K562 (cell line): ENCODE measurements at regions of chr2 and their contacts with region 1.

Region 1: GRCh38 chr2:168948621-168949212 is 47.6 kb downstream of the G6PC2 start:
- DNase-seq: peak; percentile 51 to 65 (median 58)
- ATAC-seq: peak; percentile 80
- H3K4me3 ChIP-seq: no peak overlapping the region
- H3K27ac ChIP-seq: no peak overlapping the region
- H3K4me1 ChIP-seq: peaks cover 0 to 7% of the 10 kb centered on the region in 2 experiments; a peak in 2 of 5 replicates
- H3K27me3 ChIP-seq: no peaks in the 10 kb centered on the region
- CTCF ChIP-seq: peak; percentile 54 to 68 (median 67)
- EP300 ChIP-seq: no peak
- POLR2A ChIP-seq: no peak
- RAD21 ChIP-seq: peak in 1 of 2 experiments; percentile 70; a peak in 2 of 4 replicates

Region 2: DNA sequence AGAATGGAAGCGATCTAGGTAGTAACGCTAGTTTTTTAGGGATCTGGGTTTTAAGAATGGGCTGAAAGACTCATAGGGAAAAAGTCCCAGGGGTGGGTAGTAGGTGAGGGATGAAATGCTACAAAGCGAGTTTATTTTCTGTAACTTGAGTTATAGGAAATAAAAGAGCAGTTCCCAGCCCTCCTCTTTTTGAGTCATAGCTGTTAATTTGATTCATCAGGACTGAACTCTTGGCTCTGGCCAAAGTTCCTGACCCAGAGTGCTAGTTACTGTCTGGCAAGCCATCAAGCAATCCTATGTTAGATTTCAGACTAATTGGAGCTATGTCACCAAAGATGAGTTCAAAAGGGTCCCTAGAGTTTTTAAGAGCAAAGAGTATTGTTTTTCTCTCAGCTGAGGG is 163.7 kb before region 1 on chr2:
- CTCF ChIA-PET with region 1: no interaction called
- POLR2A ChIA-PET with region 1: no interaction called
- in situ Hi-C with region 1: no loop called
- intact Hi-C with region 1: no loop called
- DNase-seq: no peak
- ATAC-seq: no peak
- H3K4me3 ChIP-seq: no peak overlapping the region
- H3K27ac ChIP-seq: no peak overlapping the region
- H3K4me1 ChIP-seq: peaks cover 0 to 14% of the 10 kb centered on the region in 2 experiments; a peak in 2 of 5 replicates
- H3K27me3 ChIP-seq: no peaks in the 10 kb centered on the region
- CTCF ChIP-seq: no peak
- EP300 ChIP-seq: no peak
- POLR2A ChIP-seq: no peak
- RAD21 ChIP-seq: no peak

Region 3: GRCh38 chr2:169038338-169038757 is 89.6 kb after region 1 on chr2:
- CTCF ChIA-PET with region 1: no interaction called
- POLR2A ChIA-PET with region 1: no interaction called
- in situ Hi-C with region 1: no loop called
- intact Hi-C with region 1: no loop called
- DNase-seq: peak in 2 of 4 experiments; percentile 44 to 52
- ATAC-seq: peak; percentile 52
- H3K4me3 ChIP-seq: no peak overlapping the region
- H3K27ac ChIP-seq: 0 out of 3 replicates have a peak overlapping the region, but pooled peaks have one; percentile 25
- H3K4me1 ChIP-seq: peaks cover 0 to 22% of the 10 kb centered on the region in 2 experiments; a peak in 4 of 5 replicates
- H3K27me3 ChIP-seq: no peaks in the 10 kb centered on the region
- CTCF ChIP-seq: no peak
- EP300 ChIP-seq: peak; percentile 45; the same call in 1 of the 2 replicates
- POLR2A ChIP-seq: no peak
- RAD21 ChIP-seq: no peak

Region 4: GRCh38 chr2:169260246-169260645 is 311.5 kb after region 1 on chr2:
- CTCF ChIA-PET with region 1: no interaction called
- POLR2A ChIA-PET with region 1: no interaction called
- in situ Hi-C with region 1: no loop called
- intact Hi-C with region 1: no loop called
- DNase-seq: peak in 3 of 4 experiments; percentile 15 to 26 (median 21)
- ATAC-seq: peak; percentile 70; the same call in 2 of the 3 replicates
- H3K4me3 ChIP-seq: no peak overlapping the region
- H3K27ac ChIP-seq: no peak overlapping the region
- H3K4me1 ChIP-seq: no peaks in the 10 kb centered on the region
- H3K27me3 ChIP-seq: peaks cover 4 to 10% of the 10 kb centered on the region in 2 experiments; a peak in 4 of 5 replicates
- CTCF ChIP-seq: peak; percentile 34 to 36 (median 36); a peak in 5 of 6 replicates
- EP300 ChIP-seq: no peak
- POLR2A ChIP-seq: no peak
- RAD21 ChIP-seq: peak in 1 of 2 experiments; percentile 70; a peak in 2 of 4 replicates

Region 5: GRCh38 chr2:169397697-169398096 is 449.0 kb after region 1 on chr2:
- CTCF ChIA-PET with region 1: no interaction called
- POLR2A ChIA-PET with region 1: no interaction called
- in situ Hi-C with region 1: loop called (anchors 25 kb)
- intact Hi-C with region 1: loop called (anchors 10 kb)
- DNase-seq: peak in 3 of 4 experiments; percentile 16 to 34 (median 32)
- ATAC-seq: peak; percentile 57; the same call in 1 of the 3 replicates
- H3K4me3 ChIP-seq: no peak overlapping the region
- H3K27ac ChIP-seq: no peak overlapping the region
- H3K4me1 ChIP-seq: peaks cover 0 to 6% of the 10 kb centered on the region in 2 experiments; a peak in 2 of 5 replicates
- H3K27me3 ChIP-seq: peaks cover 4 to 19% of the 10 kb centered on the region in 2 experiments
- CTCF ChIP-seq: peak in 2 of 3 experiments; percentile 30 to 57; a peak in 2 of 6 replicates
- EP300 ChIP-seq: no peak
- POLR2A ChIP-seq: no peak
- RAD21 ChIP-seq: peak; percentile 64 to 81